SK-N-SH (cell line): ENCODE measurements at regions of chr14 and their contacts with region 1.

Region 1: GRCh38 chr14:59483900-59484638 is at the starts of genes JKAMP and L3HYPDH:
- DNase-seq: peak; percentile 98
- H3K4me3 ChIP-seq: peak within 1 kb of the TSS; percentile 68 to 89
- H3K27ac ChIP-seq: peak within 1 kb of the TSS; percentile 97 to 99
- H3K4me1 ChIP-seq: peaks cover 12 to 26% of the 10 kb centered on the region in 2 experiments; a peak in 3 of 4 replicates
- H3K27me3 ChIP-seq: no peaks in the 10 kb centered on the region
- CTCF ChIP-seq: peak; percentile 67
- EP300 ChIP-seq: no peak; a peak in 2 of 4 replicates
- RAD21 ChIP-seq: no peak
- polyA plus RNA-seq, gene JKAMP: 95.4 and 146 TPM in 2 replicates
- polyA plus RNA-seq, gene L3HYPDH: 66.2 and 120 TPM in 2 replicates

Region 2: DNA sequence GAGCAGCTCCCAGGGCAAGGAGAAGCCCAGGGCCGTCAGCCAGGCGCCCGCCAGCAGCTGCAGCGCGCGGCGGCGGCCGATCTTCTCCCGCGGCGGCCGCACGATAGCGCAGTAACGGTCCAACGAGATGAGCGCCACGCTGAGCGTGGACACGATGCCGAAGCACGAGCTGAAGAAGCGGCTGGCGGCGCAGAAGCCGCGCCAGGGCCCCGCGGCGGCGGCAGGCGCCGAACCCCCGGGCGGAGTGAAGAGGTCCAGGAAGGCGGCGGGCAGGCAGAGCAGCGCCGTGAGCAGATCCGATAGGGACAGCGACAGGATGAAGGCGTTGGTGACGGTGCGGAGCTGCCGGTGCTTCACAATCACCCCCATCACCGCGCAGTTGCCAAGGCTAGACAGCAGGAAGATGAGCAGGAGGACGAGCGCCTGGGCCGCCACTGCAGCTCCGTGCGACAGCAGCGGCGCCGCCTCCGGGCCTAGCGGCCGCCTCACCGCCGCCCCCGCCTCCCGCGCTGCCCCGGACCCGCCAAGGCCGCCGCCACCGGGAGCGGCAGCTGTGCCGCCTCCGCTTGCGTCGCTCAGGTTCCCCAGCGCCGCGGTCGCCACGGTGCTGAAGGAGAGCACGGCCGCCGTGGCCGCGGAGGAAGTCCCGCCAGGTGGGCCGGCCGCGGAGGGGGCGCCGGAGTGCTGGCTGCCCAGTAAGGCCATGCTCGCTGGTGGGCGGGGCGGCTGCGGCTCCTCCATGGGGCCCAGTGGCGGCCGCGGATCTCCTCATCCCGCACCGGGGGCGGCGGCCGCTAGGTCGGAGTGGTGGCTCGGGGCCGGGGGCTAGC is 19.4 kb before region 1 on chr14:
- CTCF ChIA-PET with region 1: interaction called, 27 read pairs
- POLR2A ChIA-PET with region 1: interaction called, 17 read pairs
- DNase-seq: peak; percentile 86
- H3K4me3 ChIP-seq: peak overlapping the region; percentile 37 to 51; a peak in 3 of 4 replicates
- H3K27ac ChIP-seq: peak overlapping the region in 1 of 2 experiments; percentile 60; a peak in 2 of 4 replicates
- H3K4me1 ChIP-seq: peaks cover 9 to 13% of the 10 kb centered on the region in 2 experiments; a peak in 3 of 4 replicates
- H3K27me3 ChIP-seq: no peaks in the 10 kb centered on the region
- CTCF ChIP-seq: no peak
- EP300 ChIP-seq: no peak
- RAD21 ChIP-seq: no peak